Pancreas (tissue), 10 donors: ENCODE measurements at regions of chr21 and their contacts with region 1.

Region 1: GRCh38 chr21:32940079-32941014 is 85.4 kb upstream of the OLIG2 start:
- DNase-seq: peak in 3 of 6 donors; percentile 8 to 31 (median 24)
- ATAC-seq: peak; percentile 64 to 90 (median 83)
- H3K4me3 ChIP-seq: no peak overlapping the region
- H3K27ac ChIP-seq: no peak overlapping the region
- H3K4me1 ChIP-seq: no peaks in the 10 kb centered on the region
- H3K27me3 ChIP-seq: no peaks in the 10 kb centered on the region
- CTCF ChIP-seq: peak; percentile 63 to 81 (median 76)

Region 2: DNA sequence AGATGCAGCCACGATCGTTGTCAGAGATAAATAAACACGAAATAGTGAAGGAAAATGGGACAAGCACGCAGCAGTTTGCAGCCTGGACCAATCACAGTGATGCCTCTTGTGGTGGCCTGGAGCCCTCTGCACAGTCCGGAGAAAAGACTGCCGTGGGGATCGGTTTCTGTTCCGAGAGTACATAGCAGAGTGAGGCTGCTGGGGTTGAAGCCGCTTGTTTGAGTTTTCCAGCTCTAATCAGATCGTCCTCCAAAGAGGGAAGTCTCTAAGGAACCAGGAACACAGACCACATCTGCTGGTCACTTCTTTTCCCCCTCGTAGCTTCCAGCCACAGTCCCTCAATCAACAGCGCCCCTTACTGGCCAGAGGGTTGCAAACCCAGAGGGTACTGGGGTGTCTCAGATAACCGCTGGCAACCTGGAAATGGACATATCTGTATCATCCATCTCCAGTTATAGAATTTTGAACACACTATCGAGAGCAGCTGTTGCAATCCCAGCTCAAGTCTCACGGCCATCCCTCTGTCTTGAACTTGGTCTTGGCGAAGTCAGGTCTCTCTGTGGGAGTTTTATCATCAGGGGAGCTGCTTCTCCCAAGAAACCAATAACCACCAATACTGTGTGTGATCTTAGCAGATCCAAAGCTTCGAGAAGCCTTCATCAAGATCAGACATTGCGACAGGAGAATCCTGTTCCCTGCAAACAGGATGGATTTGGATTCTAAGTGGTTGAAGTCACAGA is 187.0 kb after region 1 on chr21:
- intact Hi-C with region 1: loop called in 1 of 3 experiments (anchors 10 kb)
- DNase-seq: peak in 5 of 6 donors; percentile 27 to 76 (median 62)
- ATAC-seq: peak; percentile 58 to 98 (median 88)
- H3K4me3 ChIP-seq: peak overlapping the region in 1 of 4 donors; percentile 13
- H3K27ac ChIP-seq: no peak overlapping the region
- H3K4me1 ChIP-seq: no peaks in the 10 kb centered on the region
- H3K27me3 ChIP-seq: peaks cover 0 to 5% (median 0%) of the 10 kb centered on the region in 4 donors
- CTCF ChIP-seq: peak in 3 of 4 donors; percentile 47 to 63 (median 62)